Activated T-helper 2 cell treated with anti-CD3 and anti-CD28 coated beads, Interferon-gamma antibody, Interleukin-2, Interleukin-4, amounts not matched to agents 10 μg/mL and 5 μg/mL and 100 μg/mL, durations not matched to agents 14 hours and 24 hours and 36 hours (primary cell): ENCODE measurements at regions of chr5 and their contacts with region 1.

Region 1: DNA sequence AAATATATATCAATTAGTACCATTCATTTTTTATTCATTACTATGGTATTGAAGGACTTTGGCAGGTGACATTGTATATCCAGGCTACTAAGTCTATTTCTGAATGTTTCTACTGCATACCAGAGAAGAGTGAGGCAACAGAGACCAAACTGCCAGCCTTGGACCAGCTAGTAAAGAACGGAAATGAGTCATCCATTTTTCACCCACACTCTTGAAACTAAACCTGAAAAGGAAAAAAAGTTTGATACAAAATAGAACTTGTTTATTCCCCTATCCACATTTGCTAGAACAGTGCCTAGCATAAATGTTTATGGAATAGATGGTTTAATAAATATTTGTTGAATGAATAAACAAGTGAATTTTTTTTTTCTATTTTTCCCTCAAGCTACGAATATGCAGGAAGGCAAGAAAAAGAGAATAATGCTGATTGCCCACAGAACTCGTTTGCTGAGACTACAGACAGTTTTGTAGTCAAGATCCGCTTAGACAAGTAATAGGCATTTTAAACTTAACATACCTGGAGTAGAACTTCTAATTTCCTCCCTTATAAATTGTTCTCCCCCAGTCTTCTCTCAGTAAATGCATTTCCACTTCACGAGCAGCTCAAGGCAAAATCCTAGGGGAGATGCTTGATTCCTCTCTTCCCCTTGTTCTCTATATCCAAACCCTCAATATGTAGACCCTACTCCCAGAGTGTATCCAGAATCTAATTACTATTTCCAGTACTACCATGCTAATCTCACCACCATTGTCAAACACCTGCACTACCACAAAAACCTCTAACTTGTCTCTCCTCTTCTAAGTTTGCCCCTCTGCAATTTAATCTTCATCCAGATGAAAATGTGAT is 146.2 kb upstream of the RASA1 start:
- DNase-seq: peak; percentile 37
- H3K4me3 Mint-ChIP-seq: peak overlapping the region; percentile 28
- H3K27ac Mint-ChIP-seq: peak overlapping the region; percentile 59
- H3K4me1 Mint-ChIP-seq: peaks cover 58% of the 10 kb centered on the region
- H3K27me3 Mint-ChIP-seq: no peaks in the 10 kb centered on the region

Region 2: DNA sequence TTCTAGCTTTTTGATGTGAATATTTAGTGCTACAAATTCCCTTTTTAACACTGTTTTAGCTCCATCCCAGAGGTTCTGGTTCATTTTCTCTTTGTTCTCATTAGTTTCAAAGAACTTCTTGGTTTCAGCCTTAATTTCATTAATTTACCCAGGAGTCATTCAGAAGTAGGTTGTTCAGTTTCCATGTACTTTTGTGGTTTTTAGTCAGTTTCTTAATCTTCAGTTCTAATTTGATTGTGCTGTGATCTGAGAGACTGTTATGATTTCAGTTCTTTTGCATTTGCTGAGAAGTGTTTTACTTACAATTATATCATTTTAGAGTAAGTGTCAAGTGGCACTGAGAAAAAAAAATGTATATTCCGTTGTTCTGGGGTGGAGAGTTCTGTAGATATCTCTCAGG is 94.0 kb before region 1 on chr5:
- intact Hi-C with region 1: loop called (anchors 2 kb)
- DNase-seq: no peak
- H3K4me3 Mint-ChIP-seq: no peak overlapping the region
- H3K27ac Mint-ChIP-seq: no peak overlapping the region
- H3K4me1 Mint-ChIP-seq: peaks cover 25% of the 10 kb centered on the region
- H3K27me3 Mint-ChIP-seq: peaks cover 24% of the 10 kb centered on the region

Region 3: DNA sequence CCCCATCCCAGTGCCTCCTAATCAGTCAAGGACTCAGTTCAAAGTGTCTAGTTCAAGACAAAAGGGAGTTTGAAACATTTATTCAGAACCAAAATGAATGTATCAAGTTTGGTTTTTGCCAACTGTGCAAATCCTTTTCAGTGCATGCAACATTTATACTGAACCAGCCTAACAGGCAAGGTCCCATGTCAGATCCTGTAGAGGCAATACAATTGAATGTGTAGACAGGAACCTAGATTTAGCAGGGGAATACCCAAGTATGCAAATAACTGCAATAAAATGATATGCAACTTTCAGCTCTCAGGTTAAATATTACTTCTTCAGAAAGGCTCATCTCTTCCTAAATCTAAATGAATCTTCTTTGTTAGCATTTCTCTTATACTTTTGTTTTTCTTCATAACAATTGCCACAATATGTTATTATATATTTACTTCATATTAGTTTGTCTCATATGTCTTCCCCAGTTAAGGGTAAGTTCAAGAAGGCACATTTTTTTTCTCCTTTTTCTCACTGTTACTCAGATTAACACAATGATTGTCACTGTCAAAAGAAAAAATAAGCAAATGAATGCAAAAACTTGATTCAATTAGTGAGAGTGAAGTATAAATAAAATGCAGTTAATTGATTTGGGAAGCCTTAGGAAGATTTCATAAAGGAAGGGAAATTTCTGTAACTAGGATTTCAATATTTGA is 17.8 kb before region 1 on chr5:
- intact Hi-C with region 1: loop called (anchors 2 kb)
- DNase-seq: no peak
- H3K4me3 Mint-ChIP-seq: no peak overlapping the region
- H3K27ac Mint-ChIP-seq: no peak overlapping the region
- H3K4me1 Mint-ChIP-seq: peaks cover 12% of the 10 kb centered on the region
- H3K27me3 Mint-ChIP-seq: no peaks in the 10 kb centered on the region

Region 4: DNA sequence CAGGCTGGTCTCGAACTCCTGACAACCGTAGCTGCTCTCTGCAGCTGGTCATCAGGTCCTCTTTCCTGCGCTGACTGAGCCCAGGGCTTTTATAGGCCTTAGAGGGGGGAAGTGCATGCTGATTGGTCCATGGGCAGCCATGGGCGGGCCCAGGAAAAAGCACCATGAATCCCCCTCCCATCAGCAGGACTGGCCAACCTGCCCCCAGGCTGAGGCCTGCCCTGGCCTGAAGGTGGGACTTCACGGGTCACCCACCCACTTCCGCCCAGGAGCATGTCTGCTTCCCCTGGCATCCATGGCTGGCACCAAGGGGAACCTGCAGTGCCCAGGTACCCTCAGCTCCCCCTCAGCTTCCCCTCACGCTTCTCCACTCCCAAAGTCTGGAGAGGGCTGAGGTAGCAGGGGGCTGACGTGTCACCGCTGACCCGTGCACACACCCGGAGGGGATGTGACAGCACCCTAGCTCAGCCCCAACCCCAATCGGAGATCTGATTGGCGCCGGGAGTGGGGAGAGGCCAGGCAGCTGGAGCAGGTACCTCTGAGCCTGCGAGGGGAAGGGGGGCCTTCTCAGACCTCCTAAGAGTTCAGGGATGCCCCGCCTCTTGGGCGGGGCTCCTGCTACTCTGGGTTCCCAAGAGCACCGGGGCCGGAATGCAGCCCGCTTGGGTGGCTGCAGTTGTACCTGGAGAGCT is 130.2 kb after region 1 on chr5:
- intact Hi-C with region 1: no loop called
- DNase-seq: no peak
- H3K4me3 Mint-ChIP-seq: no peak overlapping the region
- H3K27ac Mint-ChIP-seq: no peak overlapping the region
- H3K4me1 Mint-ChIP-seq: no peaks in the 10 kb centered on the region
- H3K27me3 Mint-ChIP-seq: peaks cover 23% of the 10 kb centered on the region

Region 5: GRCh38 chr5:87267574-87268125 is 146.1 kb after region 1 on chr5 and contains the start of gene RASA1:
- intact Hi-C with region 1: loop called (anchors 1 kb)
- DNase-seq: peak; percentile 74
- H3K4me3 Mint-ChIP-seq: peak within 1 kb of the TSS; percentile 94
- H3K27ac Mint-ChIP-seq: peak within 1 kb of the TSS; percentile 90
- H3K4me1 Mint-ChIP-seq: peaks cover 25% of the 10 kb centered on the region
- H3K27me3 Mint-ChIP-seq: peaks cover 4% of the 10 kb centered on the region
- total RNA-seq, gene RASA1: 21.1 and 21.9 TPM in 2 replicates

Region 6: DNA sequence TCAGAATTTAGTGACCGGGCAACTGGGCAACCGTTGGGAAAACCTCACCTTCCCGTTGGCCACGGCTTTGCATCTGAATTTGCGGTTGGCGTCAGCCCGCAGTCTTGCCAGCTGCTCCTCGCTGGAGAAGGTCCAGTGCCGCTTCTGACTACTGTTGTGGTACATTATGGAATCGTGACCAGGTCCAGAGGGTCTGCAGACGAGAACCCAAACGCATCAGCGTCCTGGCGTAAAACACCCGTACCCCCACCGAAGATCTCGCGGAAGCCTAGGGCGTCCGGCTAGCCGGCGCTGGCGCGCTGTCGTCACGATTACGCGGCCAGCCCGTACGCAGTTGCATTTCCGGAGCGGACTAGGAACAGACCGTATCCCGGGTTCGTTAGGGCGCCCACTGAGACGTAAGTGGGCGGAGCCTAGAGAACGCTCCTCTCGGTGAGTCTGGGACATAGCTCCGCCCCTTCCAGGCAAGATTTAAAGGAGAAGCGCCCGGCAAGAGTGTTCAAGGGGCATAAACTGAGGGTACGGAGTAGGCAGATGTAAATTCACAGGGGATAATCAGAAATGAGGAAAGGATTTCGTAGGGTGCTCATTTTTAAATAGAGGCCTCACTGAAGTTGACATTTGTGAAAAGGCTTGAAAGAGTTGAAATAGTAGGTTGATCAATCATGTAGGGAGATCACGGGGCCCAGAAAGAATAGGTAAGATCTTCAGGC is 291.3 kb after region 1 on chr5 and contains the start of gene CCNH:
- intact Hi-C with region 1: loop called (anchors 2 kb)
- DNase-seq: peak; percentile 95
- H3K4me3 Mint-ChIP-seq: peak within 1 kb of the TSS; percentile 99
- H3K27ac Mint-ChIP-seq: peak within 1 kb of the TSS; percentile 96
- H3K4me1 Mint-ChIP-seq: peaks cover 26% of the 10 kb centered on the region
- H3K27me3 Mint-ChIP-seq: peaks cover 4% of the 10 kb centered on the region
- total RNA-seq, gene CCNH: 68.2 and 70.1 TPM in 2 replicates